Activated T-helper 1 cell treated with anti-CD3 and anti-CD28 coated beads, Interleukin-12 subunit alpha, Interleukin-12 subunit beta, Interleukin-2, Interleukin-4 antibody, amounts not matched to agents 30 ng/mL and 10 ng/mL and 1 ng/mL, durations not matched to agents 14 hours and 24 hours and 36 hours (primary cell): ENCODE measurements at regions of chr3 and their contacts with region 1.

Region 1: DNA sequence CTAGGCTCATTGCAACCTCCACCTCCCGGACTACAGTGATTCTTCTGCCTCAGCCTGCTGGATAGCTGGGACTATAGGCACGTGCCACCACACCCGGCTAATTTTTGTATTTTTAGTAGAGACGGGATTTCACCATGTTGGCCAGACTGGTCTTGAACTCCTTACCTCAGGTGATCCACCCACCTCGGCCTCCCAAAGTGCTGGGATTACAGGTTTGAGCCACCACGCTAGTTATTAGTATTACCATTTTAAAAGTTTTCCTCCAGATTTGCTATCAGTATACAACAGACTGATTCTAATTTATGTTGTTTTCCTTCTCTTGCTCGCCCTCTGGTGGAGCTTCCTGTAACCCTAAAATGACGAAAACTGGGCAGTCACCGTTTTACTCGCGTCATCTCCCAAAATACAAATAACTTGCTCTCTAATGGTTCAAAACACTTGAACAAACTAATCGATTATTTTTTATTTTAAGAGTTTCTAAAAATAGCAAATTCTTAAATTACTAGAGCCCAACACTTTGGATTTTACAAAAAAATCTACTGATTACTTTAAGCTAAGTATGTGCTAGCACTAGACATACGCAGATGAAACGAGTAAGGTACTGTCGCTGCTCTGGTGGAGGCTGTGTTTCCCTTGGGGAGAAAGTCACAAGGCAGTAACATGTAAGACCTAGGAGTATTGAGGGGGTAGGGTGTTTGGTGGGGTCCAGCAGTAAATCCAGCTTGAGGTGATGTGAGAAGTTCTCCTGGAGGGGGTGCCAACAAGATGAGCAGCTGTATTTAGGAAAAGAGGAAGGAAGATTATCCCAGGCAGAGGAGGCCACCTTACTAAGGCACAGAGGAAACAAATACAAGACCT is 203.3 kb downstream of the MBNL1 start:
- DNase-seq: peak; percentile 41
- H3K4me3 Mint-ChIP-seq: peak overlapping the region; percentile 1
- H3K27ac Mint-ChIP-seq: peak overlapping the region; percentile 10
- H3K4me1 Mint-ChIP-seq: peaks cover 9% of the 10 kb centered on the region
- H3K27me3 Mint-ChIP-seq: peaks cover 7% of the 10 kb centered on the region

Region 2: DNA sequence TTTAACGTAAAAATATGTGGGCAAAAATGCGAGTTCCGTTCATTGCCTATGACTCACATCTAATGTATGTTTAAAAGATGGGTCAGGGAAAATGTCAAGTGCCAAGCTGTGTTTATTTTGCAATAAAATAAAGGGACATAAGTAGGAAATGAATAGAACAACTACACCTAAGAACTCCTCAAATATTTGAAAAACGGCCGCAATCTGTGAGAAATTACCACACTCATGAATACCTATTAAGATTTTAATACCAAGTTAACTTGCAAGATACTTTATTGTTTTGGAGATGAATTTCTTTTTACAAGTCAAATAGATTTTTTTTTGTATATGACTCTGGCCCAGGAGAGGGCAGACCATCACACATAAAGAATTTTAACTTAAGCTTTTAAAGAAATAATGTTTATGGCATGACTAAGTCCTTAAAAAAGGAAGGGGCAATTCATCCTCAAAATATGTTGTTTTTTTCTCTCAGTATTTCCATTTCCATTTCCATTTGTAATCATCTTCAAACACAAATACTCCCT is 445.9 kb before region 1 on chr3:
- intact Hi-C with region 1: loop called (anchors 5 kb)
- DNase-seq: no peak
- H3K4me3 Mint-ChIP-seq: no peak overlapping the region
- H3K27ac Mint-ChIP-seq: no peak overlapping the region
- H3K4me1 Mint-ChIP-seq: no peaks in the 10 kb centered on the region
- H3K27me3 Mint-ChIP-seq: peaks cover 4% of the 10 kb centered on the region

Region 3: GRCh38 chr3:152071924-152072323 is 400.1 kb before region 1 on chr3:
- intact Hi-C with region 1: loop called (anchors 1 kb)
- DNase-seq: no peak
- H3K4me3 Mint-ChIP-seq: no peak overlapping the region
- H3K27ac Mint-ChIP-seq: no peak overlapping the region
- H3K4me1 Mint-ChIP-seq: no peaks in the 10 kb centered on the region
- H3K27me3 Mint-ChIP-seq: peaks cover 2% of the 10 kb centered on the region

Region 4: DNA sequence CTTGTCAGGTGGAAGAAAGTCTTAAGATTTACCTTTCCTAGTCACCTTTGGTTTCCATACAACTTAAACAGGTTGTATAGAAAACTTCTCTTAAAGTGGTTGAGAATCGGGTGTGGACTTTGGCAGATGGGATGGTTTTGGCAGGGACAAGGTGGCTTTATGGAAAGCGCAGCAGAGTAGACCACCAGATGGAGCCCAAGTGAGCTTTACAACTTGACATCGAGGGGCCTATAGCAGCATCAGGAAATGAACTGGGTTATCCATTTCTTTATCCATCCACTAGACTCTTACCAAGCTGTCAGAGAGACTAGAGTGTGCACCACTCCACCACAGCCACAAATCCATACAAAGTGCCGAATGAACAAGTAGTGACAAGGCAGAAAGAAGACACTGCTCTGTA is 288.6 kb before region 1 on chr3:
- intact Hi-C with region 1: loop called (anchors 5 kb)
- DNase-seq: no peak
- H3K4me3 Mint-ChIP-seq: no peak overlapping the region
- H3K27ac Mint-ChIP-seq: peak overlapping the region; percentile 11
- H3K4me1 Mint-ChIP-seq: peaks cover 49% of the 10 kb centered on the region
- H3K27me3 Mint-ChIP-seq: peaks cover 7% of the 10 kb centered on the region

Region 5: GRCh38 chr3:152508705-152509104 is 36.7 kb after region 1 on chr3:
- intact Hi-C with region 1: loop called (anchors 5 kb)
- DNase-seq: no peak
- H3K4me3 Mint-ChIP-seq: no peak overlapping the region
- H3K27ac Mint-ChIP-seq: no peak overlapping the region
- H3K4me1 Mint-ChIP-seq: peaks cover 24% of the 10 kb centered on the region
- H3K27me3 Mint-ChIP-seq: peaks cover 4% of the 10 kb centered on the region

Region 6: GRCh38 chr3:152574461-152575079 is 102.5 kb after region 1 on chr3:
- intact Hi-C with region 1: loop called (anchors 1 kb)
- DNase-seq: no peak
- H3K4me3 Mint-ChIP-seq: no peak overlapping the region
- H3K27ac Mint-ChIP-seq: no peak overlapping the region
- H3K4me1 Mint-ChIP-seq: no peaks in the 10 kb centered on the region
- H3K27me3 Mint-ChIP-seq: peaks cover 22% of the 10 kb centered on the region

Region 7: DNA sequence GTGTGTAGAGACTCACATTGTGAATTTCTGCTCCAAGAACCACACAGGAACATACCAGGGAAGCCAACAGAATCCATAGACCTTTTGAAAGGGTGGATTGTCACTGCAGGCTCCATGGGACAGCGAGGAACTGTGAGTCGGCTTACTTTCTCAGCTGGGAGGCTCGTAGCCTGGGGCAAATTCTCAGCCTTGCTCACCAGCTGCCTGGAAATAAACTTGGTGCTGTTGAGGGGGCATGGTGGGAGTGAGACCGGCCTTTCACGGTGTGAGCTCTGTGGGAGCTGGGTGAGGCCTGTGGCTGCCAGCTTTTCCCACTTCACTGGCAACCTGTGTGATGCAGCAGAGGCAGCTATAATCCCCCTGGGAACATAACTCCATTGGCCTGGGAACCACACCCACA is 216.3 kb after region 1 on chr3:
- intact Hi-C with region 1: loop called (anchors 5 kb)
- DNase-seq: no peak
- H3K4me3 Mint-ChIP-seq: no peak overlapping the region
- H3K27ac Mint-ChIP-seq: no peak overlapping the region
- H3K4me1 Mint-ChIP-seq: peaks cover 7% of the 10 kb centered on the region
- H3K27me3 Mint-ChIP-seq: peaks cover 2% of the 10 kb centered on the region